PC-3 (cell line): ENCODE measurements at regions of chr22 and their contacts with region 1.

Region 1: GRCh38 chr22:19931514-19931913 is 10.1 kb upstream of the COMT start:
- DNase-seq: no peak
- ATAC-seq: no peak
- H3K4me3 ChIP-seq: no peak overlapping the region
- H3K27ac ChIP-seq: no peak overlapping the region
- H3K4me1 ChIP-seq: no peaks in the 10 kb centered on the region
- H3K27me3 ChIP-seq: no peaks in the 10 kb centered on the region
- CTCF ChIP-seq: no peak

Region 2: GRCh38 chr22:19717691-19718455 is 213.6 kb before region 1 on chr22:
- CTCF ChIA-PET with region 1: interaction called, 10 read pairs
- POLR2A ChIA-PET with region 1: no interaction called
- intact Hi-C with region 1: no loop called
- DNase-seq: peak; percentile 68
- ATAC-seq: peak; percentile 73
- H3K4me3 ChIP-seq: peak overlapping the region; percentile 62
- H3K27ac ChIP-seq: no peak overlapping the region
- H3K4me1 ChIP-seq: no peaks in the 10 kb centered on the region
- H3K27me3 ChIP-seq: no peaks in the 10 kb centered on the region
- CTCF ChIP-seq: peak; percentile 49

Region 3: DNA sequence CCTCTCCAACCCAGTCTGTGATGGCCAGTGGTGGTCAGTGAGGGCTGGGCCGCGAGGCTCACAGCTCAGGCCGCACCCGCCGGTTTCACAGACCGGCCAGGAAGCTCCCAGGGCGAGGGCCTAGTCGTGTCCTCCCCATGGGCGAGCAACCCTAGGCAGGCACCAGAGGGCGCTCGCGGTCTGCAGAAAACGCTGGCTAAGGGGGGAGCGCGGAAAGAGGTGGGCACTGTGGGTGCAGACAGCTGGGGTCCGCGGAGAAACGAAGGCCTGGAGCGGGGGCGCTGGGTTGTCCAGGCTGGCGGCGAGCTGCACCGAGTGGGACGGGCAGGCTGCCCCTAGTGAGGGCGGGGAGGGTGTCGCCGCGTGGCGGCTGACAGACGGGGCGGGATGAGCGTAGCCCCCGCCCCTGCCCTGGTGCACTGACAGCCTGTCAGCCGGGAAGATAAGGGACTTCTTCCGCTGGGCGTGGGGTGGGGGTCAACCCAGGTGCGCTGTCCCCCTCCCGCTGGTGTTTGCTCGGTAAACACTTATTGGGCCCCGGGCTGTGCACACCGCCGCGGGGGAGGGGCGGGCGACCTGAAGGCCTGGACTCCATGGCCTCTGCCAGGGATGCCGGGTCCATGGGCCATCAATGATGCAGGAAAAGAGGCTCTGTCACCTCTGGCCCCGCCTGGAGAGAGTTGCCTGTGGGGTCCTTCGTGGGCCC is 200.7 kb before region 1 on chr22:
- CTCF ChIA-PET with region 1: no interaction called
- POLR2A ChIA-PET with region 1: interaction called, 16 read pairs
- intact Hi-C with region 1: no loop called
- DNase-seq: peak; percentile 73
- ATAC-seq: peak; percentile 91
- H3K4me3 ChIP-seq: peak overlapping the region; percentile 70
- H3K27ac ChIP-seq: no peak overlapping the region
- H3K4me1 ChIP-seq: no peaks in the 10 kb centered on the region
- H3K27me3 ChIP-seq: no peaks in the 10 kb centered on the region
- CTCF ChIP-seq: peak; percentile 82

Region 4: GRCh38 chr22:19854778-19855503 is 76.6 kb before region 1 on chr22 and contains the starts of genes GNB1L and RTL10:
- CTCF ChIA-PET with region 1: no interaction called
- POLR2A ChIA-PET with region 1: no interaction called
- intact Hi-C with region 1: no loop called
- DNase-seq: peak; percentile 95
- ATAC-seq: peak; percentile 83
- H3K4me3 ChIP-seq: peak within 1 kb of the TSS; percentile 96
- H3K27ac ChIP-seq: peak within 1 kb of the TSS; percentile 71
- H3K4me1 ChIP-seq: peaks cover 44% of the 10 kb centered on the region
- H3K27me3 ChIP-seq: no peaks in the 10 kb centered on the region
- CTCF ChIP-seq: no peak
- total RNA-seq, gene GNB1L: 27.0 and 28.8 TPM in 2 replicates
- total RNA-seq, gene RTL10: 7.8 and 12.2 TPM in 2 replicates

Region 5: GRCh38 chr22:19868773-19869471 is 62.6 kb before region 1 on chr22:
- CTCF ChIA-PET with region 1: no interaction called
- POLR2A ChIA-PET with region 1: no interaction called
- intact Hi-C with region 1: no loop called
- DNase-seq: no peak
- ATAC-seq: no peak
- H3K4me3 ChIP-seq: no peak overlapping the region
- H3K27ac ChIP-seq: no peak overlapping the region
- H3K4me1 ChIP-seq: no peaks in the 10 kb centered on the region
- H3K27me3 ChIP-seq: no peaks in the 10 kb centered on the region
- CTCF ChIP-seq: no peak

Region 6: DNA sequence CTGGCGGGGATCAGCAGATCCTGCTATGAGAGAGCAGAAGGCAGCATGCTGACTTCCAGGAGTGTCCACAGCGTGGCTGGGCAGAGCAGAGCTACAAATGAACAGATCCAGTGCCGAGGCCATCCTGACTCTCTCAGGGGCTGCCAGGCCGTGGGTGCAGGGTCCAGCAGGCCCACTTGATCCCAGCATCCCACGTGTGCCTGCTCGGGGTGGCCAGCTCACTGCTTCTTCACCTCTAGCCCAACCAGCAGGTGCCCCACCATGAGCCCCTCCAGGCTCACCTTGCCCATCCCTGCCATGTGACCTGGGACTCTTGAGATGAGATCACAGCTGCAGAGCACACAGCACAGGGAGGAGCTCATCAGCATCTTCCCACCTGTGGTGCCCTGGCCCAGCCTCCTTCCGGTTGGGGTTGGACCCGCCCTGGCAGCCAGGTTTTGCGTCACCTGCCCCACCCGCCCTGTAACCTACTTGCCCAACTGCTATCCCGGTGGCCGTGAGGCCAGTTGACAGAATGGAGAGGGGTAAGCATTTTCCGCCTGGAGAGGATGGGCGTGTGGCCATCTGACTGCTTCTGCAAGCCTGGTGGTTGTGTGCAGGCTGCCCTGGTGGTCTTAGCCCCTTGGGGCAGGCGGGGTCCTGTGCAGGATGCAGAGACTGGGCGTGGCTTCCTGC is 100.4 kb after region 1 on chr22:
- CTCF ChIA-PET with region 1: no interaction called
- POLR2A ChIA-PET with region 1: no interaction called
- intact Hi-C with region 1: no loop called
- DNase-seq: no peak
- ATAC-seq: no peak
- H3K4me3 ChIP-seq: no peak overlapping the region
- H3K27ac ChIP-seq: no peak overlapping the region
- H3K4me1 ChIP-seq: no peaks in the 10 kb centered on the region
- H3K27me3 ChIP-seq: no peaks in the 10 kb centered on the region
- CTCF ChIP-seq: no peak